Tibial artery (tissue), 4 donors: ENCODE measurements at regions of chr3 and their contacts with region 1.

Region 1: DNA sequence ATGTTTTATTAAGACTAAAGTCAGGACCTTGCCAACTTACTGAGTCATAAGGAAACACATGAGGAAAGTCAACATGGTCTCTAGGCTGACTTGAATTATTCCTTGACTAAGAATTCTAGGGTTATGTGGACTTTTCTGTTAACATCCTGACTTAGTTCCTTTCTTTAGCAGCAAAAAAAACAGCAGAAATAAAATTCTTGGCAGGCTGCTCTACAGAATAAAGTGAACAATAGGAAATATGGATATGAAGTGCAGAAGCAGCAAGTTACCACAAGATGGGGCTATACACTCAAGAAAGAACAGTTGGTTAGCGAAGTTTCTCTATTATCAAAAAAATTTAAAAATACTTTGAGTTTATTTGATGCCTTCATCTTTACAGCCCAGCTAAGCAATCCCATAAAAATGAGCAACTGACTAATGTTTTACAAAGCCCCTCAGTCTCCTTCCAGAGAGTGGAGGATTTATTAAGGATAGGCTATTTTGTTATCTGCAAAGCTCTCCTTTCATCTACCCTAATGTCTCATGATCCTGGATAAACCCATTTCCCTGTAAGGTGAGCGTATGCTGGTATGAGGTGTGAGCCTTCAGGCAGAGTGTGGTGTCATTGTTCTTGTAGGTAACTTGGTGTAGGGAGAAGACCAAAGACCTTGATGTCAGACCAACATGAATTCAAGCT is 23.1 kb upstream of the MCCC1 start:
- DNase-seq: no peak
- H3K4me3 ChIP-seq: no peak overlapping the region
- H3K27ac ChIP-seq: no peak overlapping the region
- H3K4me1 ChIP-seq: peaks cover 0 to 7% (median 4%) of the 10 kb centered on the region in 4 donors
- H3K27me3 ChIP-seq: peaks cover 0 to 8% of the 10 kb centered on the region in 2 donors
- CTCF ChIP-seq: peak; percentile 76 to 91

Region 2: GRCh38 chr3:182967218-182968204 is 154.9 kb before region 1 on chr3:
- intact Hi-C with region 1: no loop called
- DNase-seq: no peak
- H3K4me3 ChIP-seq: no peak overlapping the region
- H3K27ac ChIP-seq: no peak overlapping the region
- H3K4me1 ChIP-seq: peaks cover 0 to 21% (median 6%) of the 10 kb centered on the region in 4 donors
- H3K27me3 ChIP-seq: no peaks in the 10 kb centered on the region
- CTCF ChIP-seq: no peak

Region 3: DNA sequence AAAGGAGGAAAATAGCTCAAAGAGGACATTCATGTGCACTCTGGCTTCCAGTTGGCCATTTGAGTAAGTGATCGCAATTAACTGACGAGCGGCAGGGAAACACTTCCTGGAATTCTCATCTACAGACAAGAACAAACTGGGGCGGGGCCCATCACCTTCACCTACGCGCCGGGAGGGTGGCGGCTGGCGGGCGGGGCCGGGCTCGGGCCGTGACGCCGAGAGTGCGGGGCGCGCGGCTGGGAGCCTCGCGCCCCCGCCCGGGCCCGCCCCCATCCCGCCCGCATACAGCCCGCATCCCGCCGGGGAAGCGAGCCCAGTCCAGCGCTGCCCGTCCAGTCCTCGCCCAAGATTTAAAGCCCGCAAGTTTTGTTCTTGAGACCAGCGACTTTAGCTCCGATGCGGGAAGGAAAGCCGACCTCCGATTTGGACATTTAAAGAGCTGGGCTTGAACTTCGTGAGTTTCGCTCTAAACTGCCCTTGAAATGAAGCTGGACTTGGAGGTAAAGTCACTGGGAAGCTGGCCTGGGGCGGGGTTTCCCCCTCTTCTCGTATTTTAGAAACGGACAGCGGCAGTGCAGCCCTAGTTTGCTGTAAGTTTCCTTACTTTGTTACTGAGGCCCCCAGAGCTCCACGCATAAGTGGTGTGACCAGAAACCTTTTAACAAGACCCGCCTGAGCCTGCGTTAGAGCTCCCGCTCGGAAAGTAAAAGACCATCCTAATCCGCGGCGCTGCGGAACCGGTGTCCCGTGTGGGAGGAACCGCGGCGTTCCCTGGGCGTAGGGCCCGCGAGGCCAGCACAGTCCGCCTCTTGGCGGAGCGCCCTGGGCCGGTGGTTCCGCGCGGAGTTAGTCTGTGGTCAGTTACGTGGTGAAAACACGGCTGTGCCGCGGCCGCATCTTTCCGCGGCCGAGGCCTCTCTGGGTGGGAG is 130.8 kb after region 1 on chr3 and contains the start of gene B3GNT5:
- intact Hi-C with region 1: loop called (anchors 10 kb)
- DNase-seq: peak; percentile 61 to 84
- H3K4me3 ChIP-seq: peak within 1 kb of the TSS; percentile 51 to 70
- H3K27ac ChIP-seq: peak within 1 kb of the TSS; percentile 48 to 65
- H3K4me1 ChIP-seq: peaks cover 0 to 14% (median 3%) of the 10 kb centered on the region in 4 donors
- H3K27me3 ChIP-seq: peaks cover 0 to 21% of the 10 kb centered on the region in 2 donors
- CTCF ChIP-seq: no peak

Region 4: GRCh38 chr3:183385698-183386613 is 263.6 kb after region 1 on chr3:
- intact Hi-C with region 1: loop called (anchors 5 kb)
- DNase-seq: peak in 1 of 2 donors; percentile 41
- H3K4me3 ChIP-seq: no peak overlapping the region
- H3K27ac ChIP-seq: no peak overlapping the region
- H3K4me1 ChIP-seq: no peaks in the 10 kb centered on the region
- H3K27me3 ChIP-seq: no peaks in the 10 kb centered on the region
- CTCF ChIP-seq: peak; percentile 72 to 74